Activated naive CD4-positive, alpha-beta T cell treated with anti-CD3 and anti-CD28 coated beads for 36 hours (primary cell): ENCODE measurements at regions of chr2 and their contacts with region 1.

Region 1: GRCh38 chr2:26330113-26330549 is 15.8 kb upstream of the SELENOI start:
- DNase-seq: peak; percentile 95
- H3K4me3 Mint-ChIP-seq: no peak overlapping the region
- H3K27ac Mint-ChIP-seq: no peak overlapping the region
- H3K4me1 Mint-ChIP-seq: peaks cover 7% of the 10 kb centered on the region
- H3K27me3 Mint-ChIP-seq: no peaks in the 10 kb centered on the region

Region 2: DNA sequence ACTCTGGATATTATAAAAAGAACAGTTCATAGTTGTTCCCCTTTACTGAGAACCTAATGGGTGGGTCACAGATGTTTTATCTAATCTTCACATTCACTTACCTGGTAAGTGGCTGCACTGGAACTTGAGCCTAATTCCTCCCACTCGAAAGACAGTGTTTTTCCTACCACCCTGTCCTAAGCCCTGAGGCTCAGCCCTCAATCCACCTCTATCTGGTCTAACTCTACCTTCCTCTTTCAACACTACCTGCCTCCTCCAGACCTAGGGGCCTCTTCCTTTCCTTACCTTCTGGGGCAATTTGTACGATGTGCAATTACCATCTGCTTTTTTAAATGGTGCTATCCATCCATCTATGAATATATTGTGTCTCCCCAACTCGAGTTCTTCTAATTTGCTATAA is 338.2 kb before region 1 on chr2:
- CTCF ChIA-PET with region 1: interaction called, 4 read pairs
- intact Hi-C with region 1: loop called (anchors 1 kb)
- DNase-seq: no peak
- H3K4me3 Mint-ChIP-seq: no peak overlapping the region
- H3K27ac Mint-ChIP-seq: no peak overlapping the region
- H3K4me1 Mint-ChIP-seq: peaks cover 6% of the 10 kb centered on the region
- H3K27me3 Mint-ChIP-seq: no peaks in the 10 kb centered on the region

Region 3: GRCh38 chr2:26088032-26088643 is 242.0 kb before region 1 on chr2:
- CTCF ChIA-PET with region 1: interaction called, 3 read pairs
- intact Hi-C with region 1: loop called (anchors 1 kb)
- DNase-seq: peak; percentile 17
- H3K4me3 Mint-ChIP-seq: no peak overlapping the region
- H3K27ac Mint-ChIP-seq: no peak overlapping the region
- H3K4me1 Mint-ChIP-seq: peaks cover 48% of the 10 kb centered on the region
- H3K27me3 Mint-ChIP-seq: no peaks in the 10 kb centered on the region

Region 4: DNA sequence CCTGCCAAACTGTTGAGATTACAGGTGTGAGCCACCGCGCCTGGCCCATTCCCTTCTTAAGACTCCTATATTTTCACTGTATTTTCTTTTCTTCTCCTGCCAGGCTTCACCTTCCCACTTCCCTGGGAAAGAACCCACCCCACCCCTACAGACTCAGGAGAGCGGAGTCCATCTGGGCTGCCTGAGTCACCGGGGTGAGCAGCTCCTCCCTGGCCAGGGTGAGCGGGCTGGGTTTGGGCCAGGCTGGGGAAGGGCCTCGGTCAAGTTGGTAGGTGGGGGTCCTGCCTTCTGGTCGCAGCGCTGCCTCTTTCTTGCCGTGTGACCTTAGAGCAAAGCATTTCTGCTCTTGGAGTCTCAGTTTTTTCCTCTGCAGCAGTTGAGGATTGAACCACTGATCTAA is 159.3 kb before region 1 on chr2:
- CTCF ChIA-PET with region 1: interaction called, 3 read pairs
- intact Hi-C with region 1: loop called (anchors 1 kb)
- DNase-seq: no peak
- H3K4me3 Mint-ChIP-seq: no peak overlapping the region
- H3K27ac Mint-ChIP-seq: no peak overlapping the region
- H3K4me1 Mint-ChIP-seq: peaks cover 12% of the 10 kb centered on the region
- H3K27me3 Mint-ChIP-seq: peaks cover 20% of the 10 kb centered on the region

Region 5: DNA sequence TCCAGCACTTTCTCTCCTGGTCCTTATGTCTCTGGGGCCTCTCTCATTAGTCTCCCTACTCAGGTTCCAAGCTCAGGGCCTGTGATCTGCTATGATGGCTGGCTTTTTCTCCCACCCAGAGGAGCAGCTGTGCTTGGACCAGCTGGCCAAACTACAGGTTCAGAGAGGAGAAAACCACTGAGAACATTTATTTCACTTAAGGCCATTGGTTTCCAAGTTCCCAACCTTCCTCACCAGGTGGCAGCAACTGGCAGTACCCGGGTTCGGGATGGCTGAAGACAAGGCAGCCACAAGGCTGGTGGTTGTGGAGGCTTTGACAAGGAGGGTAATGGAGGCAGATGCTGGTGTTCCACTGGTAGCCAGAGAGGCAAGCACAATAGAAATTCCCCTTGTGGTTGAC is 14.1 kb before region 1 on chr2:
- CTCF ChIA-PET with region 1: interaction called, 10 read pairs
- intact Hi-C with region 1: no loop called
- DNase-seq: no peak
- H3K4me3 Mint-ChIP-seq: no peak overlapping the region
- H3K27ac Mint-ChIP-seq: no peak overlapping the region
- H3K4me1 Mint-ChIP-seq: no peaks in the 10 kb centered on the region
- H3K27me3 Mint-ChIP-seq: no peaks in the 10 kb centered on the region